ENCODE measurements at regions of chr6 and their contacts with region 1.

Region 1: GRCh38 chr6:119449331-119450156 is 100.0 kb upstream of the MAN1A1 start:
- DNase-seq: no peak
- ATAC-seq: peak in 7 of 8 donors; percentile 36 to 57 (median 46)
- H3K4me3 ChIP-seq: no peak overlapping the region
- H3K27ac ChIP-seq: peak overlapping the region in 1 of 10 donors; percentile 71
- H3K4me1 ChIP-seq: peaks cover 0 to 53% (median 12%) of the 10 kb centered on the region in 9 donors
- H3K27me3 ChIP-seq: no peaks in the 10 kb centered on the region
- CTCF ChIP-seq: no peak

Region 2: GRCh38 chr6:119476554-119476953 is 27.0 kb after region 1 on chr6:
- intact Hi-C with region 1: loop called in 1 of 10 experiments (anchors 2 kb)
- DNase-seq: no peak
- ATAC-seq: no peak
- H3K4me3 ChIP-seq: no peak overlapping the region
- H3K27ac ChIP-seq: no peak overlapping the region
- H3K4me1 ChIP-seq: no peaks in the 10 kb centered on the region
- H3K27me3 ChIP-seq: no peaks in the 10 kb centered on the region
- CTCF ChIP-seq: no peak

Measured in heart right ventricle (tissue), 16 donors.